CD4-positive, alpha-beta T cell (primary cell): ENCODE measurements at regions of chr14 and their contacts with region 1.

Region 1: GRCh38 chr14:90383075-90383730 is 13.6 kb upstream of the CALM1 start:
- DNase-seq: peak; percentile 93 to 99 (median 97)
- ATAC-seq: peak; percentile 74
- H3K4me3 ChIP-seq: peak overlapping the region; percentile 83
- H3K4me3 Mint-ChIP-seq: no peak overlapping the region
- H3K27ac ChIP-seq: peak overlapping the region; percentile 95 to 98
- H3K27ac Mint-ChIP-seq: no peak overlapping the region
- H3K4me1 ChIP-seq: peaks cover 35% of the 10 kb centered on the region
- H3K4me1 Mint-ChIP-seq: peaks cover 23% of the 10 kb centered on the region
- H3K27me3 ChIP-seq: no peaks in the 10 kb centered on the region
- H3K27me3 Mint-ChIP-seq: no peaks in the 10 kb centered on the region
- CTCF ChIP-seq: no peak

Region 2: DNA sequence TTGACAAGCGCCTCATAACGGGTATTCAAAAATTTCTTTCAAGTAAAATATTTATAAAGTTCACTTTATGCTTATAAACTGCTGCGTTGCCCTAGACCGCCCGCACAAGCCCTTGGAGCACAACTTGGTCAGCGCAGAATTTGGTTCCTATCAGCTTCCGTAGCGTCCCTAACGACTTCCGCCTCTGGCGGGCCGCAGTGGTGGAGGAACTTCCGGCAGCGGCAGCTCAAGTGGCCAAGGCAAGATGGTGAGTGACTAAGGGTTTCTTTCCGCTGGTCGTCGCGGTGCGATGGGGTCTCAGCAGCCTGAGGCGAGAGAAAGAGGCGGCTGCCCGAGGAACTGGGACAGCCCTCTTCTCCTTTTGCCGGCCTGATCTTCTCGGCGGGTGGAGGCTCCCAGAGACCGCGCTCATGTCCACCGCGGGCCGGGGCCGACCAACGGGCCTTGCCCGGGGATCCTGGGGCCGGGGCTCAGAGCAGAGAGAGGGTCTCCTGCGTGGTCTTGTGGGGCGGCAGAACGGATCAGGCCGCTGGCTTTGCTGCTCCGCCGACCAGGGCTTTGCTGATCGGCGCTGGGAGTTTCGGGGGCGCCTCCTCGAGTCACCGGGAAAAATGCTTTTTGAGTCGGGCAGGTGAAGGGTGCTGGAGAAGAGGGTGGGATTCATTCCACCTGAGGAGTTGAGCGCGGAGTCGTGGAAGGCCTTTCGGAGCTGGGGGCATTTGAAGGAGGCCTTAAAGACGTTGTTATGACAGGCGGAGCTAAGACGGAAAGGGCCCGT is 126.7 kb before region 1 on chr14 and contains the start of gene PSMC1:
- CTCF ChIA-PET with region 1: no interaction called
- POLR2A ChIA-PET with region 1: interaction called, 38 read pairs
- intact Hi-C with region 1: no loop called
- DNase-seq: peak; percentile 79 to 93 (median 83)
- ATAC-seq: peak; percentile 94
- H3K4me3 ChIP-seq: peak within 1 kb of the TSS; percentile 79
- H3K4me3 Mint-ChIP-seq: peak within 1 kb of the TSS; percentile 99
- H3K27ac ChIP-seq: peak within 1 kb of the TSS; percentile 39 to 79
- H3K27ac Mint-ChIP-seq: peak within 1 kb of the TSS; percentile 91
- H3K4me1 ChIP-seq: peaks cover 12% of the 10 kb centered on the region
- H3K4me1 Mint-ChIP-seq: peaks cover 34% of the 10 kb centered on the region
- H3K27me3 ChIP-seq: peaks cover 0 to 4% of the 10 kb centered on the region in 2 experiments
- H3K27me3 Mint-ChIP-seq: peaks cover 16% of the 10 kb centered on the region
- CTCF ChIP-seq: no peak
- total RNA-seq, gene PSMC1: 75.8 to 80.3 TPM

Region 3: GRCh38 chr14:90331497-90332435 is 51.4 kb before region 1 on chr14 and contains the start of gene NRDE2:
- CTCF ChIA-PET with region 1: interaction called, 4 read pairs
- POLR2A ChIA-PET with region 1: interaction called, 40 read pairs
- intact Hi-C with region 1: loop called (anchors 2 to 5 kb)
- DNase-seq: peak; percentile 81 to 99 (median 93)
- ATAC-seq: peak; percentile 95
- H3K4me3 ChIP-seq: peak within 1 kb of the TSS; percentile 83
- H3K4me3 Mint-ChIP-seq: peak within 1 kb of the TSS; percentile 93
- H3K27ac ChIP-seq: peak within 1 kb of the TSS; percentile 60 to 72
- H3K27ac Mint-ChIP-seq: peak within 1 kb of the TSS; percentile 93
- H3K4me1 ChIP-seq: peaks cover 13% of the 10 kb centered on the region
- H3K4me1 Mint-ChIP-seq: peaks cover 40% of the 10 kb centered on the region
- H3K27me3 ChIP-seq: no peaks in the 10 kb centered on the region
- H3K27me3 Mint-ChIP-seq: peaks cover 11% of the 10 kb centered on the region
- CTCF ChIP-seq: no peak
- total RNA-seq, gene NRDE2: 17.5 to 17.9 TPM

Region 4: GRCh38 chr14:90368946-90369721 is 14.1 kb before region 1 on chr14:
- CTCF ChIA-PET with region 1: interaction called, 22 read pairs
- POLR2A ChIA-PET with region 1: interaction called, 36 read pairs
- intact Hi-C with region 1: loop called in 1 of 2 experiments (anchors 1 kb)
- DNase-seq: peak in 3 of 14 experiments; percentile 63 to 71 (median 66)
- ATAC-seq: peak; percentile 100
- H3K4me3 ChIP-seq: no peak overlapping the region
- H3K4me3 Mint-ChIP-seq: no peak overlapping the region
- H3K27ac ChIP-seq: no peak overlapping the region
- H3K27ac Mint-ChIP-seq: no peak overlapping the region
- H3K4me1 ChIP-seq: no peaks in the 10 kb centered on the region
- H3K4me1 Mint-ChIP-seq: peaks cover 5% of the 10 kb centered on the region
- H3K27me3 ChIP-seq: no peaks in the 10 kb centered on the region
- H3K27me3 Mint-ChIP-seq: no peaks in the 10 kb centered on the region
- CTCF ChIP-seq: peak; percentile 74

Region 5: DNA sequence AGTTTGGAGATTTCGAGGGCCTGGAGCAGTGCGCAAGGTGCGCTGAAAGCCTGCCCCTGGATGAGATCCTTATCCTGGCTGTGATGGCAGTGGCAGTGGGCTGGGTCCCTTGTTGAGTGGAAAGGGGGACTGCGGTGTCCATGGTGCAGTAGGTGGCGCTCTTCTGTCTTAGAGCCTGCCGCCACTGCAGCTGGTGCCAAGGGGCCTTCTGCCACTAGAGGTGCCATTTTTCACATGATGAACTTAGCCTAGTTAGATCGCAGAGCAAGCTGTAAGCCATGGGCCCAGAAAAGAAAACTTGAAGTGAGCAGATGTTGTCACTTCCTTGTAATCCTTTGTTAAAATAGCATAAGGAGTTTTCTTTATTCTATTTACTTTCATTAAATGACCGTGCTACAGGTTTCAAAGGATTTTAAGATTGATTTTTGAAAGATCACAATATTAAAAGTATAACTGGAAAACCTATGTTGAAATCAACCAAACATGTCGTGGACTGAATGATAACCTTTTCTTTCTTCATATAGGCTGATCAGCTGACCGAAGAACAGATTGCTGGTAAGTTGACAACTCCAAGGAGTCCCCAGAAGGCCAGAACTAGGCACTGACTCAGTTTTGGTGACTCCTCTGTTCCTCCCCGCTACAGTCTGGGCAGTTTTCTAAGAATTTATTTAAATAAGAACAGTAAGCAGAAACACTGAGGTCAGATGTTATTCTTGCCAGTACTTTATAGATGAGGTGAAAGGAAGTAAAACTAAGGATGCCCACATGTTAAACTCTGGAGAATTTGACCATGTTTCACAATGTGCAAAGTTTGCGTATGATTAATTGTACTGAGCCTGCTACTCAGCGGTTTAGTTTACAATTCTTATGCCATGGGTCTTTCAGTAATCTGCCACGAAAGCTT is 16.6 kb after region 1 on chr14:
- CTCF ChIA-PET with region 1: interaction called, 66 read pairs
- POLR2A ChIA-PET with region 1: interaction called, 423 read pairs
- intact Hi-C with region 1: loop called (anchors 1 kb)
- DNase-seq: peak; percentile 72 to 94 (median 80)
- ATAC-seq: peak; percentile 48
- H3K4me3 ChIP-seq: peak overlapping the region; percentile 62
- H3K4me3 Mint-ChIP-seq: peak overlapping the region; percentile 100
- H3K27ac ChIP-seq: peak overlapping the region; percentile 86 to 88
- H3K27ac Mint-ChIP-seq: peak overlapping the region; percentile 100
- H3K4me1 ChIP-seq: peaks cover 52% of the 10 kb centered on the region
- H3K4me1 Mint-ChIP-seq: peaks cover 73% of the 10 kb centered on the region
- H3K27me3 ChIP-seq: no peaks in the 10 kb centered on the region
- H3K27me3 Mint-ChIP-seq: peaks cover 9% of the 10 kb centered on the region
- CTCF ChIP-seq: peak; percentile 100

Region 6: GRCh38 chr14:90697577-90698206 is 314.5 kb after region 1 on chr14:
- CTCF ChIA-PET with region 1: interaction called, 3 read pairs
- POLR2A ChIA-PET with region 1: interaction called, 12 read pairs
- intact Hi-C with region 1: no loop called
- DNase-seq: peak; percentile 61 to 82 (median 71)
- ATAC-seq: peak; percentile 97
- H3K4me3 ChIP-seq: no peak overlapping the region
- H3K4me3 Mint-ChIP-seq: no peak overlapping the region
- H3K27ac ChIP-seq: no peak overlapping the region
- H3K27ac Mint-ChIP-seq: no peak overlapping the region
- H3K4me1 ChIP-seq: peaks cover 6% of the 10 kb centered on the region
- H3K4me1 Mint-ChIP-seq: no peaks in the 10 kb centered on the region
- H3K27me3 ChIP-seq: no peaks in the 10 kb centered on the region
- H3K27me3 Mint-ChIP-seq: no peaks in the 10 kb centered on the region
- CTCF ChIP-seq: peak; percentile 94

Region 7: DNA sequence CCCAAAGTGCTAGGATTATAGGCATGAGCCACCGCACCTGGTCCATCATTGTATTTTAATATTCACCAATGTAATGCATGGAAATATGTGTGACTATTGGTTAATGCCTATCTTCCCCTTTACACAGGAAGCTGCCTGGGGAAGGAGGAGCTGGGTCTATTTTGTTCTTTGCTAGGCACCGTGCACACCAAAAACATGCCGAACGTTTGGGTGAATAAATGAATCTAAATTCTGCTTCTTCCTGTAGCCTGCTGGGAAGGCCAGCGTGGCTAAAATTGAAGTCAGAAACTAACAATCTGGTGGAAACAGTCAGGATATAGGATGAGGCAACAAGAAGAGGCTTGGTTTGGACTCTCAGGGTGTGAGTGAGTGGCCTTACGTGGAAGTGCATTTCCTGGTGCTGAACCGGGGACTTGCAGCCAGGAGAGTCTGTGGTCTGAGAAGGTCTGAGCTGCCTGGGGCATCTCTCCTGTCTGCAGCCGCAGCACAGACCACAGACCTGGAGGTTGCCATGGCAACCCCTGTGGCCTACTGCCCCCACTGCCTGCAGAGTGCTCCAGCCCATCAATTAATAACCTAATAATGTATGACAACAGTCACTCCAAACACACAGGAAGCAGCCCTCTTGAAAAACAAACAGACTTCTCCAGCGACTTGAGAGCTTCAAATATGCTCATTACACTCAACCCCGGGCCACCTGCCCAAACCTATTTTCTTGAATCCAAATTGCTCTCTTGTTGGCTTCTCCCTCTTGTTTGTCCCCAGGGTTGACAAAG is 866.8 kb after region 1 on chr14:
- CTCF ChIA-PET with region 1: no interaction called
- POLR2A ChIA-PET with region 1: no interaction called
- intact Hi-C with region 1: loop called in 1 of 2 experiments (anchors 10 kb)
- DNase-seq: peak in 7 of 14 experiments; percentile 27 to 81 (median 52)
- ATAC-seq: no peak
- H3K4me3 ChIP-seq: no peak overlapping the region
- H3K4me3 Mint-ChIP-seq: peak overlapping the region; percentile 79
- H3K27ac ChIP-seq: peak overlapping the region; percentile 59 to 68
- H3K27ac Mint-ChIP-seq: peak overlapping the region; percentile 78
- H3K4me1 ChIP-seq: peaks cover 96% of the 10 kb centered on the region
- H3K4me1 Mint-ChIP-seq: peaks cover 87% of the 10 kb centered on the region
- H3K27me3 ChIP-seq: no peaks in the 10 kb centered on the region
- H3K27me3 Mint-ChIP-seq: no peaks in the 10 kb centered on the region
- CTCF ChIP-seq: no peak